Right cardiac atrium (tissue), 5 donors: ENCODE measurements at regions of chr1 and their contacts with region 1.

Region 1: GRCh38 chr1:29202584-29203340 is 21.1 kb upstream of the SRSF4 start:
- DNase-seq: peak; percentile 94 to 98 (median 97)
- ATAC-seq: peak; percentile 95 to 97
- H3K4me3 ChIP-seq: no peak overlapping the region
- H3K27ac ChIP-seq: peak overlapping the region; percentile 85
- H3K4me1 ChIP-seq: peaks cover 2% of the 10 kb centered on the region
- H3K27me3 ChIP-seq: no peaks in the 10 kb centered on the region

Region 2: GRCh38 chr1:28680141-28680540 is 522.6 kb before region 1 on chr1:
- intact Hi-C with region 1: no loop called
- DNase-seq: no peak
- ATAC-seq: no peak
- H3K4me3 ChIP-seq: no peak overlapping the region
- H3K27ac ChIP-seq: no peak overlapping the region
- H3K4me1 ChIP-seq: no peaks in the 10 kb centered on the region
- H3K27me3 ChIP-seq: no peaks in the 10 kb centered on the region

Region 3: GRCh38 chr1:29033829-29034466 is 168.8 kb before region 1 on chr1:
- intact Hi-C with region 1: loop called in 1 of 4 experiments (anchors 10 kb)
- DNase-seq: no peak
- ATAC-seq: peak in 1 of 2 donors; percentile 62
- H3K4me3 ChIP-seq: no peak overlapping the region
- H3K27ac ChIP-seq: no peak overlapping the region
- H3K4me1 ChIP-seq: no peaks in the 10 kb centered on the region
- H3K27me3 ChIP-seq: no peaks in the 10 kb centered on the region

Region 4: DNA sequence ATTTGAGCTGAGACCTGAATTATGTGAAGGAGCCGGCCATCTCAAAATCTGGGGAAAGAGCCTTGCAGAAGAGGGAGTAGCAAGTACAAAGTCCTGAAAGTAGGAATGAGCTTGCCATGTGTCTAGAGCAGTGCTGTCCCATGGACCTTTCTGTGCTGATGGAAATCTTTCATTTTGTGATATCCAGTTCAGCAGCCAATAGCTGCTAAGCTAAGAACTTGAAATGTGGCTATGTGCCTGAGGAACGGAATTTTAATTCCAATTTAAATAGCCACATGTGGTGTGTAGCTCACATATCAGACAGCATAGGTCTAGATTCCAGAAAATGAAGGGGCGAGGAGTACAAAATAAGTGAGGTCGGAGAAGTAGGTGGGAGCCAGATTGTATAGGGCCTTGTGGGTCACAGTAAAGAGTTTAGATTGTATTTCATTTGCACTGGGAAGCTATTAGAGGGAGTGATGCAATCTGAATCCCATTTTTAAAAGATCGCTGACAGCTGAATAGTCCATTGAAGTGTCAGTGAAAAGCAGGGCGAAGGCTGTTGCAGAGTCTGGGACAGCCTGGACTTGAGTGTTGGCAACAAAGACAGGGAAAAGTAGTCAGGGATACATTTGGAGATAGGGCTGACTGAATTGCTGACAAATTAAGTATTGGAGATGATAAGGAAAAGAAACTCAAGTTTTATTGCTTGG is 159.3 kb before region 1 on chr1:
- intact Hi-C with region 1: loop called (anchors 10 kb)
- DNase-seq: peak in 2 of 3 donors; percentile 16 to 43
- ATAC-seq: peak; percentile 86 to 94
- H3K4me3 ChIP-seq: peak overlapping the region; percentile 2
- H3K27ac ChIP-seq: peak overlapping the region; percentile 72
- H3K4me1 ChIP-seq: no peaks in the 10 kb centered on the region
- H3K27me3 ChIP-seq: no peaks in the 10 kb centered on the region

Region 5: GRCh38 chr1:29156543-29157268 is 46.1 kb before region 1 on chr1:
- intact Hi-C with region 1: no loop called
- DNase-seq: peak in 1 of 3 donors; percentile 61
- ATAC-seq: peak; percentile 67 to 85
- H3K4me3 ChIP-seq: no peak overlapping the region
- H3K27ac ChIP-seq: peak overlapping the region; percentile 32
- H3K4me1 ChIP-seq: peaks cover 6% of the 10 kb centered on the region
- H3K27me3 ChIP-seq: no peaks in the 10 kb centered on the region